ENCODE measurements at regions of chr14 and their contacts with region 1.

Region 1: GRCh38 chr14:99884834-99885648 is 91.8 kb downstream of the EML1 start:
- DNase-seq: peak in 1 of 2 donors; percentile 31
- H3K4me3 ChIP-seq: no peak overlapping the region
- H3K27ac ChIP-seq: no peak overlapping the region
- H3K4me1 ChIP-seq: no peaks in the 10 kb centered on the region
- H3K27me3 ChIP-seq: no peaks in the 10 kb centered on the region
- CTCF ChIP-seq: peak; percentile 70 to 93 (median 75)
- POLR2A ChIP-seq: no peak

Region 2: GRCh38 chr14:99683619-99684355 is 201.3 kb before region 1 on chr14 and contains the start of gene CYP46A1:
- intact Hi-C with region 1: loop called (anchors 2 kb)
- DNase-seq: peak; percentile 100
- H3K4me3 ChIP-seq: peak within 1 kb of the TSS; percentile 54 to 81 (median 68)
- H3K27ac ChIP-seq: peak within 1 kb of the TSS in 2 of 3 donors; percentile 30 to 67
- H3K4me1 ChIP-seq: peaks cover 11 to 15% of the 10 kb centered on the region in 2 donors
- H3K27me3 ChIP-seq: no peaks in the 10 kb centered on the region
- CTCF ChIP-seq: no peak
- POLR2A ChIP-seq: no peak
- total RNA-seq, gene CYP46A1: 0.54 to 5.2 (median 1.5) TPM

Region 3: DNA sequence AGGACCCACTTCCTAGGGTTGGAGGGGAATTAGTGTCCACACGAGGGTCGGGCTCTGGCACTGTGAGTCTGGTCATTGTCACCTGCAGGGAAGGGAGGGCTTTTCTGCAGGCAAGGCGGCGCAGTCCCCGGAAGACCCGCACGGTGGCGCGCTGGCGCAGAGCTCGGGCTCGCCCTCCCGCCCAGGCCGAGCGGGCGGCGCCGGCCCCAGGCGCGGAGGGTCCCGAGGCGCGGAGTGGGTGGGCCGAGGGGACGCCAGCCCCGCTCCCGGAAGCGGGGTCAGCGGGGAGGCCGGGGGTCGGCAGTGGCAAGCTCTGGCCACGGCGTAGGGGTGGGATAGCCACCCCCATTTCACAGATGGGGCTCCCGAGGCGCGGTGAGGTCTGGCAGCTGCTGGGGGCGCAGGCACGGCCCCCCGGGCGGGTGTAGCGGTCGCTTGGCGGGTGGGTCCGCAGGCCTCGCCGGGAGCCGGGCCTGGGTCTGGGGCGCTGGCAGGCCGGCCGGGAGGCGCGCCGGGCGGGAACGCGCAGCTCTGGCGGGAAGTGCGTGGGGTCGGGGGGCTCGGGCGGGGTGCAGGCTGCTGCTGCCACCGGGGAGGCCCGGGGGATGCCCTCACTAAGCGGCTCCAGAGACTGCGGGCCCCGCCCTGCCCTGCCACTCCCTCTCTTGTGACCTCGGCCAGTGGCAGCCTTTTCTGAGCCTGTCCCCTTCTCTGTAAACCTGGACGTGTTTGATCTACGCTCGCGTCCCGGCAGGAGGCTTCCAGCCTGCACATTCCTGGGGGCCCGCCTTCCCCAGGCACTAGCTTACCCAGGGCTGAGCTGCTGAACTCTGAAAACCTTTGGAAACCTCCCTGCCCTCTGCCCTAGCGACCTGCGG is 154.8 kb before region 1 on chr14:
- intact Hi-C with region 1: loop called (anchors 2 kb)
- DNase-seq: peak; percentile 69 to 74
- H3K4me3 ChIP-seq: peak overlapping the region in 2 of 3 donors; percentile 35 to 44
- H3K27ac ChIP-seq: no peak overlapping the region
- H3K4me1 ChIP-seq: peaks cover 0 to 48% of the 10 kb centered on the region in 2 donors
- H3K27me3 ChIP-seq: no peaks in the 10 kb centered on the region
- CTCF ChIP-seq: peak; percentile 35 to 97 (median 91)
- POLR2A ChIP-seq: no peak

Region 4: GRCh38 chr14:99793213-99794150 is 91.6 kb before region 1 on chr14 and contains the start of gene EML1:
- intact Hi-C with region 1: loop called (anchors 10 kb)
- DNase-seq: peak; percentile 86
- H3K4me3 ChIP-seq: peak within 1 kb of the TSS in 2 of 3 donors; percentile 19 to 40
- H3K27ac ChIP-seq: peak within 1 kb of the TSS; percentile 46 to 75 (median 73)
- H3K4me1 ChIP-seq: peaks cover 15 to 27% of the 10 kb centered on the region in 2 donors
- H3K27me3 ChIP-seq: no peaks in the 10 kb centered on the region
- CTCF ChIP-seq: peak in 2 of 6 experiments; percentile 15 to 33
- POLR2A ChIP-seq: peak in 1 of 2 donors; percentile 81
- total RNA-seq, gene EML1: 24.2 to 58.7 (median 37.9) TPM

Measured in thyroid gland (tissue), 4 donors.